Panc1 (cell line): ENCODE measurements at regions of chr10 and their contacts with region 1.

Region 1: GRCh38 chr10:63629363-63630084 is 108.3 kb downstream of the REEP3 start:
- DNase-seq: peak; percentile 97
- ATAC-seq: peak; percentile 83
- H3K4me3 ChIP-seq: peak overlapping the region; percentile 72 to 88
- H3K27ac ChIP-seq: peak overlapping the region; percentile 99
- H3K4me1 ChIP-seq: peaks cover 43% of the 10 kb centered on the region
- H3K27me3 ChIP-seq: no peaks in the 10 kb centered on the region
- CTCF ChIP-seq: peak; percentile 95

Region 2: GRCh38 chr10:62384057-62384446 is 1245.5 kb before region 1 on chr10:
- CTCF ChIA-PET with region 1: no interaction called
- POLR2A ChIA-PET with region 1: no interaction called
- in situ Hi-C with region 1: no loop called
- intact Hi-C with region 1: no loop called
- DNase-seq: peak; percentile 92
- ATAC-seq: peak; percentile 86
- H3K4me3 ChIP-seq: peak overlapping the region; percentile 28 to 40
- H3K27ac ChIP-seq: peak overlapping the region; percentile 100
- H3K4me1 ChIP-seq: peaks cover 94% of the 10 kb centered on the region
- H3K27me3 ChIP-seq: no peaks in the 10 kb centered on the region
- CTCF ChIP-seq: no peak

Region 3: GRCh38 chr10:63217120-63217605 is 412.4 kb before region 1 on chr10:
- CTCF ChIA-PET with region 1: interaction called, 9 read pairs
- POLR2A ChIA-PET with region 1: no interaction called
- in situ Hi-C with region 1: no loop called
- intact Hi-C with region 1: loop called (anchors 1 kb)
- DNase-seq: peak; percentile 41
- ATAC-seq: peak; percentile 95
- H3K4me3 ChIP-seq: no peak overlapping the region
- H3K27ac ChIP-seq: peak overlapping the region; percentile 21; the same call in 1 of the 2 replicates
- H3K4me1 ChIP-seq: peaks cover 18% of the 10 kb centered on the region; the same call in 1 of the 2 replicates
- H3K27me3 ChIP-seq: no peaks in the 10 kb centered on the region
- CTCF ChIP-seq: peak; percentile 76; the same call in 1 of the 2 replicates

Region 4: GRCh38 chr10:63318491-63318890 is 311.0 kb before region 1 on chr10:
- CTCF ChIA-PET with region 1: interaction called, 14 read pairs
- POLR2A ChIA-PET with region 1: no interaction called
- in situ Hi-C with region 1: no loop called
- intact Hi-C with region 1: no loop called
- DNase-seq: no peak
- ATAC-seq: no peak
- H3K4me3 ChIP-seq: no peak overlapping the region
- H3K27ac ChIP-seq: no peak overlapping the region
- H3K4me1 ChIP-seq: no peaks in the 10 kb centered on the region
- H3K27me3 ChIP-seq: no peaks in the 10 kb centered on the region
- CTCF ChIP-seq: no peak

Region 5: DNA sequence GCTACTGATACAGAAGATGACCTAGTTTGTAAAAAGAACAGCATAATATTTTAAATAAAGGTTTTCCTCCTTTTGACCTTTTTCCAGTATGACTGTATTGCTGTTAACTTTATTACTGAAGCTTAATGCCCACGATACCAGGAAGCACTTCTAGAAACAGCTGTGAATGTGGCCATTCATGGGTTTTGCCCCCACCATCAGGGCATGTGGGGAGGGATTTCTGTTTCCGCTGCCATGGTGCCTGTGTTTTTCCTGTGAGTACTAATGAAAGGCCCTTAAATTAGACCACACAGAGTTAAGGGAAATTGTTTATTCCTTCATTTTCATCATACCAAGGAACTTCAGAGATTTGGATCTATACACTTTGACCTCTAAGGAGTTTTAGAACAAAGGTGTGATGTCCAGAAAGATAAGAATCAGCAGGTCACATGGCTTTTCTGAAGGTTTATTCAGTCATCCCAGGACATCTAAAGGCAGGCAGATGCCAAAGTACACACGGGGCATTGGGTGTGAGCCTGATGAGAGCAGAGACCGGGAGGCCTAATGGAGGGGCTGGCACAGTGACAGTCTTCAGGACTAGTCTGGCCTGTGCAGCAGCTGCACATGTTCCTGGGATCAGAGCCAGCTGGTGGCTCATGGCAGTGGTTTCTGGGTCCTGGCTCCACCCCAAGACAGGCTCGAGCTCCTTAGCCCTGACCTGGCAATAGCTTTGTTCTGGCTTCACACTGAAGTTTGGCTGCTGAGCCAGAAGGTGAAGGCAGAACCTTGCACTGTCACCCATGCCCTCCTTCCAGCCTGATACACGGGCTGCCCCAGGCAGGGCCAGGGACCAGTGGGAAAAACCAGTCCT is 82.6 kb after region 1 on chr10:
- CTCF ChIA-PET with region 1: interaction called, 4 read pairs
- POLR2A ChIA-PET with region 1: interaction called, 3 read pairs
- in situ Hi-C with region 1: no loop called
- intact Hi-C with region 1: loop called (anchors 5 kb)
- DNase-seq: peak; percentile 90
- ATAC-seq: peak; percentile 91
- H3K4me3 ChIP-seq: no peak overlapping the region
- H3K27ac ChIP-seq: peak overlapping the region; percentile 82
- H3K4me1 ChIP-seq: peaks cover 64% of the 10 kb centered on the region
- H3K27me3 ChIP-seq: no peaks in the 10 kb centered on the region
- CTCF ChIP-seq: no peak

Region 6: GRCh38 chr10:64798297-64798696 is 1168.8 kb after region 1 on chr10:
- CTCF ChIA-PET with region 1: no interaction called
- POLR2A ChIA-PET with region 1: no interaction called
- in situ Hi-C with region 1: no loop called
- intact Hi-C with region 1: no loop called
- DNase-seq: no peak
- ATAC-seq: no peak
- H3K4me3 ChIP-seq: no peak overlapping the region
- H3K27ac ChIP-seq: no peak overlapping the region
- H3K4me1 ChIP-seq: 0 out of 2 replicates have a peak, but pooled peaks cover 2% of the 10 kb centered on the region
- H3K27me3 ChIP-seq: no peaks in the 10 kb centered on the region
- CTCF ChIP-seq: no peak